ENCODE measurements at regions of chr13 and their contacts with region 1.

Region 1: DNA sequence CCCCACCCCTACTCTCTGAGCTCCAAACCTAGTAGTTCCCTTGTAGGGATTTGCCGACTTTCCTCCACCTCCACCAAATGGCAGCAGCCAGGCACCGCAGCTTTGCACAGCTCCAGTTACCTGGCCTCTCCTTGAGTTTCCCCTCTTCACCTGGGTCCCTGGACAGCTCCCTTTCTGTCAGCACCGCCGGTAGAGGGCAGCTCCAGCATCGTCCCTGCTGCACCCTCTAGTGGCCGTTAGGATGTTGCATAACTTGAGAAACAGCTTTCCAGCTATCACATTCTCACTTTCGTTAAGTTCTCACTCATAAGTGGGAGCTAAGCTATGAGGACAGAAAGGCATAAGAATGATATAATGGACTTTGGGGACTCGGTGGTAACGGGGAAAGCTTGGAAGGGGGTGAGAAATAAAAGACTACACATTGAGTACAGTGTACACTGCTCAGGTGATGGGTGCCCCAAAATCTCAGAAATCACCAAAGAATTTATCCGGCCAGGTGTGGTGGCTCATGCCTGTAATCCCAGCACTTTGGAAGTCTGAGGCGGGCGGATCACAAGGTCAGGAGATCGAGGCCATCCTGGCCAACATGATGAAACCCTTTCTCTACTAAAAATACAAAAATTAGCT is 60.4 kb upstream of the OLFM4 start:
- DNase-seq: peak; percentile 3
- H3K4me3 ChIP-seq: no peak overlapping the region
- H3K27ac ChIP-seq: no peak overlapping the region
- H3K27me3 ChIP-seq: no peaks in the 10 kb centered on the region
- CTCF ChIP-seq: peak; percentile 97

Region 2: DNA sequence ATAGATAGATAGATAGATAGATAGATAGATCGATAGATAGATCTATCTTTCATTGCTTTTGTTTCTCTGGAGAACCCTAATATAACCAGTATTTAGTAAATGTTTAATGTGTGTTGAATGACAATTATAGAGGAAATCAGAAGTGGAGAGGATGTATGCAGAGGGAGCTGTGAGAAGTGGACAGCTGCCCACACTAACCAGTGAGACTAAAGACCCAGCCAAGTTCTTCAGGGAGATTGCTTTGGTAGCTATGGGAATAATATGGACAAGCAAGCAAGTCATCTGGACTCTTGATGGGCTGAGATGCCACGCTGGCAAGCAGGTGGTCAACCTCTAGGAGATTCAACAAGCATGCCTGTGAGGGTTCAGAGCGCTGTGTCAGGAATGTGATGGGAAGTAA is 1500.5 kb before region 1 on chr13:
- CTCF ChIA-PET with region 1: no interaction called
- POLR2A ChIA-PET with region 1: no interaction called
- DNase-seq: no peak
- H3K4me3 ChIP-seq: no peak overlapping the region
- H3K27ac ChIP-seq: no peak overlapping the region
- H3K27me3 ChIP-seq: no peaks in the 10 kb centered on the region
- CTCF ChIP-seq: no peak

Region 3: DNA sequence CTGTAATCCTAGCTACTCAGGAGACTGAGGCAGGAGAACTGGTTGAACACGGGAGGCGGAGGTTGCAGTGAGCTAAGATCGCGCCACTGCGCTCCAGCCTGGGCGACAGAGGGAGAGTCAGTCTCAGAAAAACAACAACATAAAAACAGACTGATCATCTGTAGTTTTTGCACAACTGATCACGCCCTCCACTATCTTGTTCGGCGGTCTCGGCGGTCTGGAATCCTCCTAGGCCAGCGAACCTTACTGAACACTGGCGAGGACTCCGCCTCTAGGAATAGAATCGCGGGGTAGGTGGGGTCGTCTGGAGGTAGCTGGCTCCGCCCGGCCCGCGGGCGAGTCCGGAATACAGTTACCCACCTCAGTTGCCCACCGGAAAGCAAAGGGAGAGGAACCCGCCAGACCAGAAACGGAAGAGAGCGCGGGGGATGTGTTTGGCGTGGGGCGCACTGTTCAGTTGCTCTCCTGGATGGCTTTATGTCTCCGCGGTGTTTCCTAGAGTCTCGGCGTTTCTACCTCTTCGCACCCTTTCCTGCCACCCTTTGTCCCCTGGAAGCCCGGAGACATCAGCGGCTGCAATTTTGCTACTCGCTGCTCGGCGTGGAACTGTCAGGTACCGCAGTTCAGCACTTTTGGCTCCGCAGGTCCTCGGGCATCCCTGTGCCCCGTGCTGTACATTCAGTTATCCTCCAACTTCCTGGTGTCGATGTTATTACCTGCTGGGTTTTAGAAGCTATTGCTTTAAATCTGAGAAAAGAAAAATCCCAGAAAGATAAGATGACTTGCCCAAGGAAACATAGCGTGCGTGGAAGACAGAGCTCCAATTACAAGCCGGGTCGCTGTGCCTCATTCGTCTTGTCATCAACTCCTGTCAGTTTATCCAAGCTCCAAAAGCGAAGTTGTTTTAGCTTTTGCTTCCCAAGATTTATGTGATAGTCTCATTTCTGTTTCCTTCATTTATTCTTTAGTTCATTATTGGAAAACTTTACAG is 350.8 kb before region 1 on chr13:
- CTCF ChIA-PET with region 1: interaction called, 10 read pairs
- POLR2A ChIA-PET with region 1: no interaction called
- DNase-seq: peak; percentile 53
- H3K4me3 ChIP-seq: peak overlapping the region; percentile 89
- H3K27ac ChIP-seq: peak overlapping the region; percentile 47
- H3K27me3 ChIP-seq: no peaks in the 10 kb centered on the region
- CTCF ChIP-seq: no peak

Region 4: DNA sequence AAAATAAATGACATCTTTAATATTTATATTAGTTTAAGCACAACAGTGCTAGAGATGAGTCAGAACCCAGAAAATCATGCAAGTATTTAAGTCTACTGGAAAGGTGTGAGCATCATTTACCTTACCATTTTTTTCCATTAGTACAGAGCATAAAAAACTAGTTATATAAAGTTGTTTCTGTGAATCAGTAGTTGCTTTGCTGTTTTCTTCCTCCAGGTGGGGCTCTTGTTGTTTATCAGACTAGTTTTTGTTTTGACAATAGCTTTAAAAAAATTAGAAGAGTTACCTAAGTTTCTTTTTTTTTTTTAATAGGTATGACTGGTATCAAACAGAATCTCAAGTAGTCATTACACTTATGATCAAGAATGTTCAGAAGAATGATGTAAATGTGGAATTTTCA is 302.9 kb before region 1 on chr13:
- CTCF ChIA-PET with region 1: interaction called, 14 read pairs
- POLR2A ChIA-PET with region 1: no interaction called
- DNase-seq: no peak
- H3K4me3 ChIP-seq: no peak overlapping the region
- H3K27ac ChIP-seq: no peak overlapping the region
- H3K27me3 ChIP-seq: no peaks in the 10 kb centered on the region
- CTCF ChIP-seq: peak; percentile 54

Region 5: DNA sequence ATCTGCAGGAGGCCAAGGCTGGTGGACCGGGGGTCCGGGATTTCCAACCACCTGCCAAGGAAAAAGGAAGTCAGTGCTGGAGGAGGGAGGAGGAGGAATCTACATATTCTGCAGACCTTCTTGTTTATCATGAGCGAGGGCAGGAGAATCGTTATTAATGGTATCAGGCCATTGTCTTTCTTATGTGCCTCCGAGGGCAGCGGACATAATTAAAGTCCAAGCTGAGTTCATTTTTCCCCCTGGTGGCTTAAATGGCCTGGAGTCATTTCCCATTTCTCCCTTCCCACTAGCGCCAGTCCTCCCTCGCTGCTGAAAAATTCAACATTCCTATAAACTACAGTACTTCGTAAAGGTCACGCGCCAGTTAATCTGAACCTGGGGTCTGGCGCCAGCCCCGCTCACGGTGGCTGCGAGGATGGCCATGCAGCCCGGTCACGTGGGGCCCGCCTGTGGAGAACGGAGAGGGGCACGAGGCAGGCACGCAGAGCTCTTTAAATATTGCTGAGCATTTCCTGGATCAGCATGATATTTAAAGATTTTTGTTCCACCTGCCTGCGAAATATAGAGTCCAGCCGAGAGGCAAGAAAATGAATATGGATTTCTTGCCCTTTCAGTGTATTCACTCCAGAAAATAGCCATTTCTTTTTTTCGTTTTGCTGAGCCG is 34.5 kb before region 1 on chr13:
- CTCF ChIA-PET with region 1: no interaction called
- POLR2A ChIA-PET with region 1: no interaction called
- DNase-seq: no peak
- H3K4me3 ChIP-seq: no peak overlapping the region
- H3K27ac ChIP-seq: no peak overlapping the region
- H3K27me3 ChIP-seq: no peaks in the 10 kb centered on the region
- CTCF ChIP-seq: no peak

Region 6: GRCh38 chr13:52945348-52945747 is 22.8 kb before region 1 on chr13:
- CTCF ChIA-PET with region 1: interaction called, 12 read pairs
- POLR2A ChIA-PET with region 1: no interaction called
- DNase-seq: no peak
- H3K4me3 ChIP-seq: no peak overlapping the region
- H3K27ac ChIP-seq: no peak overlapping the region
- H3K27me3 ChIP-seq: no peaks in the 10 kb centered on the region
- CTCF ChIP-seq: no peak

Region 7: GRCh38 chr13:53012707-53013106 is 44.5 kb after region 1 on chr13:
- CTCF ChIA-PET with region 1: no interaction called
- POLR2A ChIA-PET with region 1: no interaction called
- DNase-seq: no peak
- H3K4me3 ChIP-seq: no peak overlapping the region
- H3K27ac ChIP-seq: no peak overlapping the region
- H3K27me3 ChIP-seq: no peaks in the 10 kb centered on the region
- CTCF ChIP-seq: no peak

Region 8: GRCh38 chr13:53151336-53152056 is 183.3 kb after region 1 on chr13:
- CTCF ChIA-PET with region 1: interaction called, 62 read pairs
- POLR2A ChIA-PET with region 1: no interaction called
- DNase-seq: no peak
- H3K4me3 ChIP-seq: no peak overlapping the region
- H3K27ac ChIP-seq: no peak overlapping the region
- H3K27me3 ChIP-seq: no peaks in the 10 kb centered on the region
- CTCF ChIP-seq: peak; percentile 77